ENCODE measurements at regions of chr6 and their contacts with region 1.

Region 1: DNA sequence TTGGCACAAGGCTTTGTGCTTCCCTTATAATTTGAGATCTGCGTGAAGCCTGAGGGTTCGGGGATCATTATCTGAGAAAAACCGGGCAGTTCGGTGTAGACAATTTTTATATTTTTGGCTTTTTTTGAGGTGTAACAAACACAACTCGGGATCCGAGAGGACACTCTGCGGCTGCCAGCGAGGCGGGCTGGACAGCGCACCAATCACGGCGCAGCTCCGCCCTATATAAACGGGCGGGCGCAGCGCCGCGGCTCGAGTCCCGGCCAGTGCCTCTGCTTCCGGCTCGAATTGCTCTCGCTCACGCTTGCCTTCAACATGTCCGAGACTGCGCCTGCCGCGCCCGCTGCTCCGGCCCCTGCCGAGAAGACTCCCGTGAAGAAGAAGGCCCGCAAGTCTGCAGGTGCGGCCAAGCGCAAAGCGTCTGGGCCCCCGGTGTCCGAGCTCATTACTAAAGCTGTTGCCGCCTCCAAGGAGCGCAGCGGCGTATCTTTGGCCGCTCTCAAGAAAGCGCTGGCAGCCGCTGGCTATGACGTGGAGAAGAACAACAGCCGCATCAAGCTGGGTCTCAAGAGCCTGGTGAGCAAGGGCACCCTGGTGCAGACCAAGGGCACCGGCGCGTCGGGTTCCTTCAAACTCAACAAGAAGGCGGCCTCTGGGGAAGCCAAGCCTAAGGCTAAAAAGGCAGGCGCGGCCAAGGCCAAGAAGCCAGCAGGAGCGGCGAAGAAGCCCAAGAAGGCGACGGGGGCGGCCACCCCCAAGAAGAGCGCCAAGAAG is 69.0 kb downstream of the HFE start:
- DNase-seq: peak; percentile 89
- CTCF ChIP-seq: no peak

Region 2: DNA sequence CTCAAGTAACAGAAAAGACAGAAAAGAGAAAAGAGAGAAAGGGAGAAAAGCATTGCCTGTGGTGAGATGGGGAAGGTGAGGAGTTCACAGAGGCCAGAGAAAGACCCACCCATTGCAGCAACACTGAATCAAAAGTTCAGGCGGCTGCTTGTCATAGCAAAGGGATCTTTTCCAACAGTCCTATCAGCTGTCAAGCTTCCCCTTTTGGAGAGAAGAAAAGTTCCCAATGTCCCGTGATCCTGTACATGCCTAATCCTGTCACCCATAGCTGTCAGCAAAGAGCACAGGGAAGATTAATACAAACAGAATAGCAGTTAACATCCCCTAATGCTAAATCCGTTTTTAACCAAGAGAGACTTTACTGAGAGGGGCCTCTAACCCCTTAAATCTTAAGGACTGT is 202.5 kb before region 1 on chr6:
- CTCF ChIA-PET with region 1: no interaction called
- POLR2A ChIA-PET with region 1: no interaction called
- DNase-seq: no peak
- CTCF ChIP-seq: no peak

Region 3: DNA sequence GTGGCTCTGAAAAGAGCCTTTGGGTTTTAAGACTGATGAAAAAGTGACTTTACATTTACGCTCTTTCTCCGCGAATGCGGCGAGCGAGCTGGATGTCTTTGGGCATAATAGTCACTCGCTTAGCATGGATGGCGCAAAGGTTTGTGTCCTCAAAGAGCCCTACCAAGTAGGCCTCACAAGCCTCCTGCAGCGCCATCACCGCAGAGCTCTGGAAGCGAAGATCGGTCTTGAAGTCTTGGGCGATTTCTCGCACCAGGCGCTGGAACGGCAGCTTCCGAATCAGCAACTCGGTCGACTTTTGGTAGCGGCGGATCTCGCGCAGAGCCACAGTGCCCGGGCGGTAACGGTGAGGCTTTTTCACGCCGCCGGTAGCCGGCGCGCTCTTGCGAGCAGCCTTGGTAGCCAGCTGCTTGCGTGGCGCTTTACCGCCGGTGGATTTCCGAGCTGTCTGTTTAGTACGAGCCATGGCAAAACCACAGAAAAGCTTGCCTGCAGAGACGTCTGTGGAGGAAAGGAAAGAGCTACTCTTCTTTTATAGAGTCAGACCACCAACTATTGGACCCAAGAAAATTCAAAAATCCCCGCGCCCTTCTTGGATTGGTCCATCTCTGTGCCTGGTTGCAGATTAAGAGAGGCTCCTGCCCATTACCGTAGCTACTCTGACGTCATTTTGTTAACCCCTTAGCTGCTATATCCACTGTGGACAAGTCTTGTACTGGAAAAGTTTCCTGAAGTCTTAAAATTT is 124.5 kb before region 1 on chr6:
- CTCF ChIA-PET with region 1: interaction called, 4 read pairs
- POLR2A ChIA-PET with region 1: interaction called, 20 read pairs
- DNase-seq: peak; percentile 89
- CTCF ChIP-seq: peak; percentile 9

Region 4: GRCh38 chr6:26087284-26088115 is 68.8 kb before region 1 on chr6 and contains the start of gene HFE:
- CTCF ChIA-PET with region 1: no interaction called
- POLR2A ChIA-PET with region 1: interaction called, 13 read pairs
- DNase-seq: peak; percentile 41
- CTCF ChIP-seq: no peak

Region 5: GRCh38 chr6:26129656-26130055 is 26.6 kb before region 1 on chr6:
- CTCF ChIA-PET with region 1: interaction called, 28 read pairs
- POLR2A ChIA-PET with region 1: interaction called, 211 read pairs
- DNase-seq: no peak
- CTCF ChIP-seq: no peak

Region 6: DNA sequence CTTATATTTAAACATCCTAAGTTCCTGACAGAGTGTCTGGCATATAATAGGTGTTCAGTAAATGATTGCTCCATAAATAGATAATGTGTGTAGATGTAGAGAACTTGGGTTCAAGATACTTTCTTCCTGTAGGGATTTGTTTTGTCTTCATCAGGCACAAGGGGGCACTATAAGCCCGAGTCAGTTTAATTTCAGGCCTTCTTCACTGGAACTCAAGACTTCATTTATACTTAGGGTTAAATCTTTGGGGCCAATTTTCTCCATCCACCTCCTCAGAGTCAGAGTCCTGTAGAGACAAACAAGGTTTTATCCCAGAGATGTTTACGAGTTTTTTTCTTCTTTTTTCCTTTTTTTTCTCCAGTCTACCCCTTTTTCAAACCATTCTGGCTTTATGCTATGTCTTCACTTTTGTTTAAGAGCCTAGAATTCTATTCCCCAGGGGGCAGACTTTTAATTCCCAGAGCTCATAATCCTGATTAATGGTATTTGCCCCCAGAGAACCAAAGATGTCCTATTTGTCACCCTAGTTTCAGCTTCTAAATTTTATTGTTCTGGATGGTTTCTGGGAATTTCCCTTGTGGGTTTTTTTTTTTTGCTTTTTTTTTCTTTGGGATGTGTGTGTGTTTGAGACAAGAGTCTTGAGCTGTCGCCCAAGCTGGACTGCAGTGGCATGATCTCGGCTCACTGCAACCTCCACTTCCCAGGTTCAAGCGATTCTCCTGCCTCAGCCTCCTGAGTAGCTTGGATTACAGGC is 19.3 kb after region 1 on chr6:
- CTCF ChIA-PET with region 1: interaction called, 8 read pairs
- POLR2A ChIA-PET with region 1: interaction called, 20 read pairs
- DNase-seq: peak; percentile 59
- CTCF ChIP-seq: peak; percentile 59

Region 7: DNA sequence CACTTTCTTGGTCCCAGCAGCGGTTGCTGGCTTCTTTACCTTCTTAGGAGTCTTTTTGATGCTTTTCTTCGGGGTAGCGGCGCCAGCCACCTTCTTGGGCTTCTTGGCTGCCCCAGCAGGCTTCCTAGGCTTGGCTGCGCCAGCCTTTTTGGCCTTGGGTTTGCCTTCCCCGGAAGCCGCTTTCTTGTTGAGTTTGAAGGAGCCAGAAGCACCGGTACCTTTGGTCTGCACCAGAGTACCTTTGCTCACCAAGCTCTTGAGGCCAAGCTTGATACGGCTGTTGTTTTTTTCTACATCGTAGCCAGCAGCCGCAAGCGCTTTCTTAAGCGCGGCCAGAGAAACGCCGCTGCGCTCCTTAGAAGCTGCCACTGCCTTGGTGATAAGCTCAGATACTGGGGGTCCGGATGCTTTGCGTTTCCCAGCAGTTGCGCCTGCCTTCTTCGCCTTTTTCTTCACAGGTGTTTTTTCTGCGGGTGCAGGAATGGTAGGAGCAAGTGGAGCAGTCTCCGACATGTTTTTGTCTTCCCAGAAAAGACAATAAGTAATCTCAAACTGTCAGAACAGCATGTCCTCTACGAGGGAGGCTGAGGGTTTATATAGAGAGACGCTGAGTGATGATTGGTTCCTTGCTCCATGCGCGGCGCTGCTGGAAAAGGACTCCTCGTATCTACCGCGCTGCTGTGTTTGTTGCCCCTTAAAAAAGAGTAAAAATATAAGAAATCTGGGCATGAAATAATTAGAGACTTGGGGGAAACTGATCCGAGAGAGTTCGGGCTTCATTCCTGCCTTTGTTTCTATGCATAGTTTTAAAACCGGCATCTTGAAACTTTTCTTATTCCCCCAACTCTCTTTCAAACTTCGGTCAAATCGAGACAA is 78.4 kb after region 1 on chr6:
- CTCF ChIA-PET with region 1: no interaction called
- POLR2A ChIA-PET with region 1: interaction called, 14 read pairs
- DNase-seq: peak; percentile 73
- CTCF ChIP-seq: no peak

Region 8: GRCh38 chr6:26270903-26271667 is 114.8 kb after region 1 on chr6:
- CTCF ChIA-PET with region 1: no interaction called
- POLR2A ChIA-PET with region 1: interaction called, 16 read pairs
- DNase-seq: peak; percentile 91
- CTCF ChIP-seq: no peak